Prostate gland (tissue), 2 donors: ENCODE measurements at regions of chr13 and their contacts with region 1.

Region 1: GRCh38 chr13:39144941-39145533 is 106.8 kb downstream of the NHLRC3 start:
- DNase-seq: peak; percentile 42
- H3K4me3 ChIP-seq: no peak overlapping the region
- H3K27ac ChIP-seq: no peak overlapping the region
- H3K4me1 ChIP-seq: no peaks in the 10 kb centered on the region
- H3K27me3 ChIP-seq: no peaks in the 10 kb centered on the region
- CTCF ChIP-seq: peak in 3 of 4 experiments; percentile 33 to 66 (median 62)
- POLR2A ChIP-seq: no peak

Region 2: GRCh38 chr13:39012608-39013007 is 132.4 kb before region 1 on chr13:
- intact Hi-C with region 1: no loop called
- DNase-seq: no peak
- H3K4me3 ChIP-seq: no peak overlapping the region
- H3K27ac ChIP-seq: no peak overlapping the region
- H3K4me1 ChIP-seq: no peaks in the 10 kb centered on the region
- H3K27me3 ChIP-seq: no peaks in the 10 kb centered on the region
- CTCF ChIP-seq: no peak
- POLR2A ChIP-seq: no peak

Region 3: DNA sequence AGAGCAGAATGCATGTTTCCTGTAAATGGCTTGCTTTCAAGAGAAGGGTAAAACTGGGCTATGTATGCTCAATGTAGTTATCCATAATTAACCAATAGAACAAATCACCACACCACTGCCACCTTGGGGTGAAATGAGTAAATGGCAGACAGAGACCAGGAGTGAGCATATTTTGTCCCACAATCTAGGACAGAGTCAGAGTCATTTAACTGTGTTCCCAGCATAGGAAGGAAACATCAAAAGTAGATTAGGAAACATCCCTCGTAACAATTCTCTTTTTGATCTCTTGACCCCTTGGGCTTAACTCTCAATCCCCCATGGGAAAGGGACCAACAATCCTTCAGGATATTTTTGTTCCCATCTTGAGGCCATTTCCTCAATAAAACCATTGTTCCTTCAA is 118.0 kb after region 1 on chr13:
- intact Hi-C with region 1: loop called (anchors 2 kb)
- DNase-seq: peak; percentile 9
- H3K4me3 ChIP-seq: no peak overlapping the region
- H3K27ac ChIP-seq: no peak overlapping the region
- H3K4me1 ChIP-seq: no peaks in the 10 kb centered on the region
- H3K27me3 ChIP-seq: no peaks in the 10 kb centered on the region
- CTCF ChIP-seq: peak; percentile 30 to 56 (median 51)
- POLR2A ChIP-seq: no peak

Region 4: GRCh38 chr13:39401046-39401705 is 256.1 kb after region 1 on chr13:
- intact Hi-C with region 1: no loop called
- DNase-seq: no peak
- H3K4me3 ChIP-seq: no peak overlapping the region
- H3K27ac ChIP-seq: no peak overlapping the region
- H3K4me1 ChIP-seq: no peaks in the 10 kb centered on the region
- H3K27me3 ChIP-seq: no peaks in the 10 kb centered on the region
- CTCF ChIP-seq: no peak
- POLR2A ChIP-seq: no peak

Region 5: GRCh38 chr13:39415008-39415802 is 270.2 kb after region 1 on chr13:
- intact Hi-C with region 1: loop called (anchors 10 kb)
- DNase-seq: peak; percentile 23
- H3K4me3 ChIP-seq: no peak overlapping the region
- H3K27ac ChIP-seq: peak overlapping the region in 1 of 2 donors; percentile 3
- H3K4me1 ChIP-seq: no peaks in the 10 kb centered on the region
- H3K27me3 ChIP-seq: no peaks in the 10 kb centered on the region
- CTCF ChIP-seq: peak in 3 of 4 experiments; percentile 23 to 35 (median 31)
- POLR2A ChIP-seq: no peak

Region 6: GRCh38 chr13:39631307-39631706 is 486.3 kb after region 1 on chr13:
- intact Hi-C with region 1: no loop called
- DNase-seq: no peak
- H3K4me3 ChIP-seq: no peak overlapping the region
- H3K27ac ChIP-seq: no peak overlapping the region
- H3K4me1 ChIP-seq: no peaks in the 10 kb centered on the region
- H3K27me3 ChIP-seq: no peaks in the 10 kb centered on the region
- CTCF ChIP-seq: no peak
- POLR2A ChIP-seq: no peak